Right ventricle myocardium superior (tissue), 1 donor: ENCODE measurements at regions of chr1 and their contacts with region 1.

Region 1: GRCh38 chr1:27102707-27103491 is 52.0 kb downstream of the SLC9A1 start:
- DNase-seq: peak; percentile 86
- ATAC-seq: peak; percentile 51

Region 2: DNA sequence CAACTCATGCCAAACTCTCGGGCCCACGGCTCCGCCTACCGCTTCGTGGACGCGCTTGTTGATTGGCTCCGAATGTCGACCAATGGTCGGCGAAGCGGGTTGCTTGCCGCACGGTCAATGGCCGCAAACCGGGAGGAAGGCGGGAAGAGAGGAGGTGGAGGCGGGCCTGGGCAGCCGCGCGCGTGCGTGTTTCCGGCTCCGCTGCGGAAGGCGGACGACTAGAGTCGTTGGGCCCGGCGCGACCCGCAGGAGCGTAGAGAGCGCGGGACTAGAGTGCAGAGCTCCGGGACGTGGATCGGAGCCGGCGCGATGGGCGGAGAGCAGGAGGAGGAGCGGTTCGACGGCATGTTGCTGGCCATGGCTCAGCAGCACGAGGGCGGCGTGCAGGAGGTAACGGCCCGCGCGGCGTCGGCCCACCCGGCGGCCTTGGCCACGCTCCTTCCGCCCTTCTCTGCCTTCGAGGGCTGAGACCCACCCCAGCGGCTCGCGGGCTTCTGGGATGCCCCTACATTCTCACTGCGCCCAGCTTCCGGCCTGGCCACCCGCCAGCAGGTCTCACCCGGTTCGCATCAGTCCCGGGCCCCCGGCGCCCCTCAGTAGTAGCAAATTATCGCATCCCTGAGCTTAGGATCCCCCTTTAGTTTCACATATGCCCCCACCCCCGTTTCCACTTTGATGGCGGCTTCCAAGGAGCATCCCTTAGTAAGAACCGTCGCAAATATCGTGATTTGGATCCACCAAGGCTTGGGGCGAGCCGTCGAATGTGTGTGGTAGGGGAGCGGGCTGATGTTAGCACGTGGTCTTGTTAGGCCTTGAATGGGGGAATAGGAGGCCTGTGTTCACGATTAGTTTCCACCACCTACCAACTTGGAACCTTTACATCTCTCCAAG is 181.1 kb before region 1 on chr1 and contains the start of gene NUDC:
- intact Hi-C with region 1: no loop called
- DNase-seq: peak; percentile 98
- ATAC-seq: peak; percentile 99
- total RNA-seq, gene NUDC: 78.1 TPM

Region 3: DNA sequence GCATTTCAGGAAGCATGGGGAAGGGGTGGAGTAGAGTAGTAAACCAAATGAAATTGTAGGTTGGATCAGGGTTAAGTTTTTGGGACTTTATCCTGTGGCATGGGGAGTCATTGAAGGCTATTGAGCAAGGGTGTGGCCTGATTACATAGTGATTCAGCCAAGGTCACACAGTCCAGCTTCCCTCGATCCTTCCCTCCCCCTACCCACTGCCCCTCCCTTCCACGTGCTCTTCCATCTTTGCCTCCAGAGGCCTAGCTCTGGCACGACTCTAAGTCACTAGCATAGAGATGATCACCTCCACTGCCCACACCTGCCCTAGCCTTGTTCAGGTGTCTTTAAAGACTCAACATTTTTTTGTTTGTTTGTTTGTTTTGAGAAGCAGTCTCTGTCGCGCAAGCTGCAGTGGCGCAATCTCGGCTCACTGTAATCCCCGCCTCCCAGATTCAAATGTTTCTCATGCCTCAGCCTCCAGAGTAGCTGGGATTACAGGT is 89.2 kb after region 1 on chr1:
- intact Hi-C with region 1: loop called (anchors 10 kb)
- DNase-seq: no peak
- ATAC-seq: peak; percentile 36

Region 4: GRCh38 chr1:27284425-27285273 is 181.8 kb after region 1 on chr1:
- intact Hi-C with region 1: loop called (anchors 5 kb)
- DNase-seq: peak; percentile 90
- ATAC-seq: peak; percentile 89